ENCODE measurements at regions of chr5 and their contacts with region 1.

Region 1: GRCh38 chr5:132829742-132830435 is 558 bp downstream of the SHROOM1 start:
- DNase-seq: no peak
- H3K4me3 ChIP-seq: peak overlapping the region; percentile 70
- H3K27ac ChIP-seq: no peak overlapping the region
- H3K27me3 ChIP-seq: no peaks in the 10 kb centered on the region
- CTCF ChIP-seq: peak; percentile 92

Region 2: GRCh38 chr5:132490486-132491367 is 339.2 kb before region 1 on chr5 and contains the start of gene IRF1:
- CTCF ChIA-PET with region 1: no interaction called
- POLR2A ChIA-PET with region 1: no interaction called
- DNase-seq: peak; percentile 84
- H3K4me3 ChIP-seq: peak within 1 kb of the TSS; percentile 97
- H3K27ac ChIP-seq: peak within 1 kb of the TSS; percentile 81
- H3K27me3 ChIP-seq: no peaks in the 10 kb centered on the region
- CTCF ChIP-seq: no peak
- polyA plus RNA-seq, gene IRF1: 22.6 and 30.0 TPM in 2 replicates

Region 3: DNA sequence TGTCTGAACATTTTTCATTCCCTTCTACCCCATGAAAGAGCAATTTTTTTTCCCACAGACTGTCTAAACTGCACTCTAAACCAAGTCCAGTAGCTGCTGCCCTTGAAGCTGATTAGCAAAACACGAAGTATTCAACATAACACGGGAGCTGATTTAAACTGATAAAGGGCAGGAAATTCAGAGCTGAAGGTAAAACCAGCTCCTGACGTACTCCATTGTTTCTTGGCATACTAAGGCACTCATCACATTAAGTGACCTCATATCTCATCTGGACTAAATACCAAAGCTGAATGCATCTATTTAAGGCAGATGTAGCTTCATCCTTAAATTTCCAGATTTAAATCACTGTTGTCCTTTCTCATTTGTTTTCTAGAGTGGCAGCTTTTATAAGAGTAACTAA is 24.4 kb after region 1 on chr5:
- CTCF ChIA-PET with region 1: interaction called, 14 read pairs
- POLR2A ChIA-PET with region 1: no interaction called
- DNase-seq: no peak
- H3K4me3 ChIP-seq: no peak overlapping the region
- H3K27ac ChIP-seq: no peak overlapping the region
- H3K27me3 ChIP-seq: no peaks in the 10 kb centered on the region
- CTCF ChIP-seq: no peak

Region 4: GRCh38 chr5:132866342-132867045 is 36.6 kb after region 1 on chr5 and contains the starts of genes GDF9 and UQCRQ:
- CTCF ChIA-PET with region 1: interaction called, 23 read pairs
- POLR2A ChIA-PET with region 1: interaction called, 12 read pairs
- DNase-seq: peak; percentile 99
- H3K4me3 ChIP-seq: peak within 1 kb of the TSS; percentile 97
- H3K27ac ChIP-seq: peak within 1 kb of the TSS; percentile 94
- H3K27me3 ChIP-seq: no peaks in the 10 kb centered on the region
- CTCF ChIP-seq: peak; percentile 42
- polyA plus RNA-seq, gene GDF9: 0.14 and 0.15 TPM in 2 replicates
- polyA plus RNA-seq, gene UQCRQ: 318 and 329 TPM in 2 replicates

Region 5: DNA sequence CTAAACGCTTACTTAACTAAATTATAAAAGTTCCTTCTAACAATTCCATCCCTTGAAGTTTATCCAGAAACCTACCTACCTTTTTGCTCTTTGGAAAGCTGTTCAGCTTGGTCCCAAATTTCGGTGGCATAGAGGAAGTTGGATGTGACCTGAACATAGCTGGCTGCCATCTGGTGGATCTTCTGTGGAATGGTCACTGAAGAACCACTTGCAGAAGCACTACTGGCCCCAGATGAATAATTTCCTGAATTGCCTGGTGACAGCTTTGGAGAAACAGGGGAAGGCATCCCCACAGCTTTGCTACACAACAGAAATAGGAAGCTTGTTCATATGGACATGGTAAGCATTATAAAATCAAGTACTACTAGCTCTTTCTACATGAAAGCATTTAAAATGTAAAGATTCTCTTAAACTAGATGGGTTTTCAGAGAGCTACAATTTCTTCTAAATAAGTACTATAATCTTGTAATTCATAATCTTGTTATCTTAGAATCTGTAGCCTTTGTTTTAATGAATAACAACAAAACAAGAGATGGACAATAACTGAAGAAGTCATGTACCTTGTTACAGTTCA is 53.5 kb after region 1 on chr5:
- CTCF ChIA-PET with region 1: interaction called, 35 read pairs
- POLR2A ChIA-PET with region 1: interaction called, 3 read pairs
- DNase-seq: peak; percentile 33
- H3K4me3 ChIP-seq: no peak overlapping the region
- H3K27ac ChIP-seq: no peak overlapping the region
- H3K27me3 ChIP-seq: no peaks in the 10 kb centered on the region
- CTCF ChIP-seq: peak; percentile 65

Region 6: DNA sequence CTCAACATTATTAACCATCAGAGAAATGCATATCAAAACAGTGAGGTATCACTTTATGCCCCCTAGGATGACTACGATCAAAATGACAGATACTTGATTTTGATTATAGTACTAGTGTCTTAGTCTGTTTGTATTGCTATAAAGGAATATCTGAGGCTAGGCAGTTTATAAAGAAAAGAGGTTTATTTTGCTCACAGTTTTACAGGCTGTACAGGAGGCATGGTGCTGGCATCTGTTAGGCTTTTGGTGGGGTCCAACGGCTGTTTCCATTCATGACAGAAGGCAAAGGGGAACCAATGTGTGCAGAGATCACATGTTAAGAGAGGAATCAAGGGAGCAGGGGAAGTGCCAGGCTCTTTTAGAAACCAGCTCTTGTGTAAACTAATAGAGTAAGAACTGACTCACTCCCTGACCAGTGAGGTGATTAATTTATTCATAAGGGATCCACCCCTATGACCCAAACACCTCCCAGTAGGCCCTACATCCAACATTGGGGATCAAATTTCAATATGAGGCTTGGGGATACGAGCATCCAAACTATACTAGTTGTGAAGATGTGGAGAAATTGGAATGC is 149.6 kb after region 1 on chr5:
- CTCF ChIA-PET with region 1: no interaction called
- POLR2A ChIA-PET with region 1: no interaction called
- DNase-seq: no peak
- H3K4me3 ChIP-seq: no peak overlapping the region
- H3K27ac ChIP-seq: no peak overlapping the region
- H3K27me3 ChIP-seq: no peaks in the 10 kb centered on the region
- CTCF ChIP-seq: no peak

Measured in AG04450 (cell line).